ENCODE measurements at regions of chr12 and their contacts with region 1.

Region 1: DNA sequence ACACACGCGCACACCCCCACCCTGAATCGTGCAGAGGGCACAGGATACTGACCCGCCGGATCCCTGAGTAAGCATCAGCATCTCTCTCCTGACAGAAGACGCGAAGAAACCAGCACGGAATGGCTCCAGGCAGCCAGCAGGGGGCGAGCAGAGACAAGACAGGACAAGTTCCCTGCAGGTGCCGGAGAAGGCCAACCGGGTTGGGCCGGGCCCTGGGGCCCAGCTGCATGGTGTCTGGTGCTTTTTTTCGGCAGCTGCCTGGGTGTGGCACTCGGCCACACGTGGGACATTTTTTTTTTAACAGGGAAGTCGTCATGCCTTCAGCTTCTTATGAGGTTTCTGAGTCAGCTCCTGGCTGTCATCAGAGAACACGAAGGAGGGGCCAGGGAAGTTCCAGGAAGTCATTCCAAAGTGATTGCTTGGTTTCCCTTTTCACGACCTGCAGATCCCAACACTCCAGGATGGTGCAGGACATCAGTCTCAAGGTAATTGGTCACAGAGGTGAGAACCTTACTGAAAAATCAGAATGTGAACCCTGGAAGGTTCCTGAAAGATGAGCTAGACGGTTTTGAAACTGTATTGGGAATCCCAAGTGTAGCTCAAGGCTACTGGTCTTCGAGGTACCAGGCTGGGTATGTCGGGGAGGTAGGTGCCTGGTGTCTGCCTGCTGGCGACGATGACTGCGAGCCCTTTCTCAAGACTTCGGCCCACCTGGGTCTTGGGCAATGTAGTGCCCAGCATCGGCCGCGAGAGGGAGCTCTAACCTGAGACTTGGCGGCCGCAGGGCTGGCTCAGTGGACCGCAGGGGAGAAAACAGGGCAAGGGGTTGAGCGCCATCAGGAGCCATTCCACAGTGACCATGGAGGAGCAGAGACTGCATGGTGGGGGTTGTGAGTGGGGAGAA is 190.8 kb upstream of the PRMT8 start:
- DNase-seq: peak; percentile 94
- H3K4me3 Mint-ChIP-seq: peak overlapping the region; percentile 47
- H3K27ac Mint-ChIP-seq: peak overlapping the region; percentile 87
- H3K4me1 Mint-ChIP-seq: peaks cover 33% of the 10 kb centered on the region
- H3K27me3 Mint-ChIP-seq: peaks cover 22% of the 10 kb centered on the region
- CTCF ChIP-seq: peak; percentile 88

Region 2: DNA sequence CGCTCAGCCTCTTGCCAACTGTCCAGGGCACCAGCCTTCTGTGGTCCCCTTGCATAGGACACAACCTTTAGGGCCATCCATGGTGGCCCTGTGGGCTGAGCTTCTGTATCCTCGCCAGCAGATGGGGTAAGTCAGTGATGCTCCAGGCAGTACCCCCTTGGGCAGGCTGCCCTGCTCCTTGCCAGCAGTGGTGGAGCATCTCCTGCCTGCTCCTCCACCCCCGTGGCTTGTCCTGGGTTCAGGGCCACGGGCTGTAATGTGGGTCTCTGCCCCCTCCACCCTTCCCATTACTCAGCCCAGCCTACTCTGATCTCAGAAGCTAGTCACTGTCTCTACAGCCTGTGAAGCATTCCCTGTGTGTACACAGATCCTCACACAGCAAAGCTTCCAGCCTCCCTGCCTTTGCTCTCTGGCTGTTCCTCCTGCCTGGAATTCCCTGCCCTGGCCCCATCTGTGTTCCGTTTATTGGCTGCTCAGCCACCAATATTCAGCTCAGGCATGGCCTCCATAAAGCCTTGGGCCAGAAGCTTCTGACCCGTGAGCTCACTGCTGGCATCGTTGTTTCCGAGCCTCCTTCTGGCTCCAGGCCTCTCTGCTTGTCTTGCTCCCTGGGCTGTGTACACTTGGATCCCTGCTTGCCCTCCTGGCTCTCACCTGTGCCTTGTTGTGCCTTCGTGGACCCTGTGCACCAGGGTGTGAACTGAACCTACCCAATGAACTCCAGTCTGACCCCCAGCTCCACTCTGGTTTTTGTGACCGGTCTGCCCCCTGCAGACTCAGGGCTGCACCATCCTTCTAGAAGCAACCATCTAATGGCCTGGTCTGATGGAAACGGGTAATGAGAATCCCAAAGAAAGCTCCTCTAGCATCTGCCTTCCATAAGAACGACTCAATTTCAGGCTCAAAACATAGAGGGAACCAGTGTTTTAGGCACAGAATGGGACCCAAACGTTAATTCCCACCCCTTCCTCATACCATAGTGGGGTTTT is 13.8 kb after region 1 on chr12:
- CTCF ChIA-PET with region 1: interaction called, 24 read pairs
- intact Hi-C with region 1: no loop called
- DNase-seq: peak; percentile 54
- H3K4me3 Mint-ChIP-seq: no peak overlapping the region
- H3K27ac Mint-ChIP-seq: no peak overlapping the region
- H3K4me1 Mint-ChIP-seq: peaks cover 31% of the 10 kb centered on the region
- H3K27me3 Mint-ChIP-seq: peaks cover 18% of the 10 kb centered on the region
- CTCF ChIP-seq: peak; percentile 28

Region 3: GRCh38 chr12:3371018-3371417 is 70.8 kb after region 1 on chr12:
- CTCF ChIA-PET with region 1: no interaction called
- intact Hi-C with region 1: loop called (anchors 5 kb)
- DNase-seq: no peak
- H3K4me3 Mint-ChIP-seq: no peak overlapping the region
- H3K27ac Mint-ChIP-seq: no peak overlapping the region
- H3K4me1 Mint-ChIP-seq: no peaks in the 10 kb centered on the region
- H3K27me3 Mint-ChIP-seq: peaks cover 35% of the 10 kb centered on the region
- CTCF ChIP-seq: no peak

Region 4: GRCh38 chr12:3662521-3662921 is 362.3 kb after region 1 on chr12:
- CTCF ChIA-PET with region 1: interaction called, 5 read pairs
- intact Hi-C with region 1: loop called (anchors 5 kb)
- DNase-seq: no peak
- H3K4me3 Mint-ChIP-seq: no peak overlapping the region
- H3K27ac Mint-ChIP-seq: peak overlapping the region; percentile 10
- H3K4me1 Mint-ChIP-seq: peaks cover 31% of the 10 kb centered on the region
- H3K27me3 Mint-ChIP-seq: no peaks in the 10 kb centered on the region
- CTCF ChIP-seq: no peak

Region 5: DNA sequence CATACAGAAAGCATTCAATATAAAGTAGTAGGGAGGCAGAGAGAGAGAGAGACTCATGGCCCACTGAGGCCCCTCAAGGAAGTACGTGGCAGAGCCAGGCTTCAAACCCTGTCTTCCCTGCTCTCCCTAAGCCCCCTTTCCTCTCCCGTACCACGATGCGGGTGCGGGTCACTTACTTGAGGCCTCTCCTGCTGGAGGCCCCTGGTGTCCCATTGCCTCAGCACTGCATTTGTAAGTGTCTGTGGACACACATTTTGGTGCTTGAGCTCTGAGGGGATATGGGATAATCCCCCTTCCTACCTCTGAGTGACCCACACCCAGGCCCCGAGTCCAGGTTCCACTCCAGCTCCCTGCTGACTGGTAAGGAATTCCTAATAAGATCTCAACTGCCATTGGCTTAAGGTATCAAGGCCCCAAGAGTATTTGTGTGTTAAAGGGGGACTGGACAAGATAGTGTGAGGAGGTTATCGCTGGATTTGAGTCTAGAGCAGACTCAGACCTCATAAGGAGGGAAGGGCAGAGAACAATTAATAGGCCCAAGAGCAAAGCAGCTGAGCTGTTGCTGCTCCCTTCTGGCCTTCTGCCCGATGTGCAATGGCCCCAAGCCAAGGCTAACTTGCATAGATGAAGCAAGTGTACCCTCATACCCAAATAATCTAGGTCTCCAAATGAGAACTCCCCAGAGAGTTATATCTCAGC is 380.9 kb after region 1 on chr12:
- CTCF ChIA-PET with region 1: interaction called, 16 read pairs
- intact Hi-C with region 1: no loop called
- DNase-seq: peak; percentile 38
- H3K4me3 Mint-ChIP-seq: no peak overlapping the region
- H3K27ac Mint-ChIP-seq: no peak overlapping the region
- H3K4me1 Mint-ChIP-seq: no peaks in the 10 kb centered on the region
- H3K27me3 Mint-ChIP-seq: no peaks in the 10 kb centered on the region
- CTCF ChIP-seq: no peak

Region 6: DNA sequence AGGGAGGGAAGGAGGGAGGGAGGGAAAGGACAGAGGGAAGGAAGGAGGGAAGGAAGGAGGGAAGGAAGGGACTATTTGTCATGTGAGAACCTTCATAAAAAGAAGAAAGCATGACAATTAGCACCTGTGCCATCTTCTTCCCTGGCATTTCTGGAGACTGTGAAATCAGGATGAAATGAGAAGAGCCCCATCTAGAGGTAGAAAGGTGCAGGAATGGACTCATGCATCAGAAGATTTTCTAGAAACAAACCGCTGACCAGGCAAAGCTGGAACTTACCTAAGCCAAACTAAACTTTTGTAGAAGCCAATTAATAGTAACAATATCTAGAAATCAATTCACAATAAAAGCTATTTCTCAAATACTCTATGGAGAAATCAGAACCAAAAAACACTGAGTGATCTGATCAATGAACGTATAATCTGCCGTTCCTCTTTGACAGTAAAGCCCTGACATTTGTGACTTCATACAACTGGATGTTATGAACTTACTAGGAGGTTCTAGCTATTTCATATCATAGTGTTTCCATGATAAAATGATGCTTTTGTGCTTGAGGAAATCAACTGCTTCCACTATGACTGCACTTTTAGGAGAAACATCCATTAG is 477.1 kb after region 1 on chr12:
- CTCF ChIA-PET with region 1: interaction called, 19 read pairs
- intact Hi-C with region 1: loop called (anchors 1 kb)
- DNase-seq: peak; percentile 37
- H3K4me3 Mint-ChIP-seq: no peak overlapping the region
- H3K27ac Mint-ChIP-seq: no peak overlapping the region
- H3K4me1 Mint-ChIP-seq: no peaks in the 10 kb centered on the region
- H3K27me3 Mint-ChIP-seq: no peaks in the 10 kb centered on the region
- CTCF ChIP-seq: peak; percentile 31

Region 7: DNA sequence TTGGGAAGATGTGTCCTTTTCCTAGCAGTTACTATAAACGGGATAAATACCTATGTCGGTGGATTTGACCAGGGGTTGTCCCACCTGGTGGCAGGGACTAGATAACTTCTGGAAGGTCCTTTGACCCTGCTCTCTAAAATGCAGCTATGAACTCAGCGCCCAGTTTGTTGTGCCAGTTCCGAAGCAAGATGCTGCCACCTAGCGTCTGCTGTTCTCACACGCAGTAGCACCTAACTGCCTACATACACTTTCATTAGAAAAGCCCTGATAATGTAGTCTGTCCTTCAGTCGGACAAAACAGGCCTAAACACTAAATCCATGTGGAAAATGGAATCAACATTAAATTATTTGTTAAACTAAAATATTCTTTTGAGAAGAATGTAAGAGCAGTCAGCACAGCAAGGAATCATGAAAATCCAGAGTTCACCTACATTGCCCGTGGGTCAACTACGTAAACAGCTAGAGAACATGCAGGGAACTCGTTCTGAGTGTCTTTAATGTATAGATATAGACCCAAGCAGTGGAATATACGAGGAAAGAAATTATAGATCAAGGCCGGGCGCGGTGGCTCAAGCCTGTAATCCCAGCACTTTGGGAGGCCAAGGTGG is 503.8 kb after region 1 on chr12:
- CTCF ChIA-PET with region 1: interaction called, 51 read pairs
- intact Hi-C with region 1: loop called (anchors 1 kb)
- DNase-seq: peak; percentile 71
- H3K4me3 Mint-ChIP-seq: no peak overlapping the region
- H3K27ac Mint-ChIP-seq: no peak overlapping the region
- H3K4me1 Mint-ChIP-seq: no peaks in the 10 kb centered on the region
- H3K27me3 Mint-ChIP-seq: no peaks in the 10 kb centered on the region
- CTCF ChIP-seq: peak; percentile 52